ENCODE measurements at regions of chr17 and their contacts with region 1.

Region 1: DNA sequence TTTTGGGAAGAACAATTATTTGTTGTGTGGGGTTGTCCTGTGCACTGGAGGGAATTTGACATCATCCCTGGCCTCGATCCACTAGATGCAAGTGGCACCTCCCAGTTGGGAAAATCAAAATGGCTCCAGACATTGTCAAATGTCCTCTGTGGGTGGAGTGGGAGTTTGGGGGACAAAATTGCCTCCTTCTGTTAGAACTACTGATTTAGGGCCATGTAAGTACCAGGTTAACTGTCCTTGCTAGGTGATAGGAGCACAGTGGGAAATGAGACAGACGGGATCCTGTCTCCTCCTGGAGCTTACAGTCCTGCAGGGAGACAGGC is 56.8 kb downstream of the ARHGAP23 start:
- DNase-seq: no peak
- ATAC-seq: no peak
- H3K4me3 ChIP-seq: no peak overlapping the region
- H3K27ac ChIP-seq: peak overlapping the region in 8 of 10 donors; percentile 2 to 84 (median 27)
- H3K4me1 ChIP-seq: peaks cover 0 to 40% (median 19%) of the 10 kb centered on the region in 9 donors
- H3K27me3 ChIP-seq: no peaks in the 10 kb centered on the region
- CTCF ChIP-seq: peak in 2 of 9 donors; percentile 1 to 12

Region 2: GRCh38 chr17:38379438-38379837 is 105.7 kb before region 1 on chr17:
- intact Hi-C with region 1: no loop called
- DNase-seq: no peak
- ATAC-seq: no peak
- H3K4me3 ChIP-seq: no peak overlapping the region
- H3K27ac ChIP-seq: no peak overlapping the region
- H3K4me1 ChIP-seq: no peaks in the 10 kb centered on the region
- H3K27me3 ChIP-seq: no peaks in the 10 kb centered on the region
- CTCF ChIP-seq: no peak

Region 3: GRCh38 chr17:38421171-38421841 is 63.8 kb before region 1 on chr17:
- intact Hi-C with region 1: loop called in 9 of 10 experiments (anchors 2 to 10 kb)
- DNase-seq: no peak
- ATAC-seq: peak in 6 of 8 donors; percentile 7 to 50 (median 19)
- H3K4me3 ChIP-seq: peak overlapping the region in 1 of 10 donors; percentile 10
- H3K27ac ChIP-seq: peak overlapping the region in 7 of 10 donors; percentile 15 to 90 (median 71)
- H3K4me1 ChIP-seq: peaks cover 10 to 63% (median 48%) of the 10 kb centered on the region in 9 donors
- H3K27me3 ChIP-seq: peaks cover 0 to 56% (median 23%) of the 10 kb centered on the region in 7 donors
- CTCF ChIP-seq: no peak

Region 4: GRCh38 chr17:38428112-38428642 is 56.9 kb before region 1 on chr17 and contains the start of gene ARHGAP23:
- intact Hi-C with region 1: loop called in 9 of 10 experiments (anchors 2 to 10 kb)
- DNase-seq: peak; percentile 77 to 80
- ATAC-seq: peak; percentile 53 to 76 (median 67)
- H3K4me3 ChIP-seq: peak within 1 kb of the TSS; percentile 80 to 99 (median 95)
- H3K27ac ChIP-seq: peak within 1 kb of the TSS; percentile 91 to 100 (median 96)
- H3K4me1 ChIP-seq: peaks cover 19 to 87% (median 67%) of the 10 kb centered on the region in 9 donors
- H3K27me3 ChIP-seq: peaks cover 0 to under 1% (median 0%) of the 10 kb centered on the region in 7 donors
- CTCF ChIP-seq: no peak
- total RNA-seq, gene ARHGAP23: 48.3 to 78.4 (median 68.0) TPM

Region 5: GRCh38 chr17:38444151-38444550 is 41.0 kb before region 1 on chr17:
- intact Hi-C with region 1: loop called in 9 of 10 experiments (anchors 2 to 5 kb)
- DNase-seq: peak; percentile 73 to 75
- ATAC-seq: peak; percentile 63 to 78 (median 70)
- H3K4me3 ChIP-seq: peak overlapping the region in 3 of 10 donors; percentile 9 to 17 (median 13)
- H3K27ac ChIP-seq: peak overlapping the region in 7 of 10 donors; percentile 70 to 91 (median 81)
- H3K4me1 ChIP-seq: peaks cover 17 to 81% (median 65%) of the 10 kb centered on the region in 9 donors
- H3K27me3 ChIP-seq: no peaks in the 10 kb centered on the region
- CTCF ChIP-seq: peak; percentile 80 to 96 (median 88)

Region 6: DNA sequence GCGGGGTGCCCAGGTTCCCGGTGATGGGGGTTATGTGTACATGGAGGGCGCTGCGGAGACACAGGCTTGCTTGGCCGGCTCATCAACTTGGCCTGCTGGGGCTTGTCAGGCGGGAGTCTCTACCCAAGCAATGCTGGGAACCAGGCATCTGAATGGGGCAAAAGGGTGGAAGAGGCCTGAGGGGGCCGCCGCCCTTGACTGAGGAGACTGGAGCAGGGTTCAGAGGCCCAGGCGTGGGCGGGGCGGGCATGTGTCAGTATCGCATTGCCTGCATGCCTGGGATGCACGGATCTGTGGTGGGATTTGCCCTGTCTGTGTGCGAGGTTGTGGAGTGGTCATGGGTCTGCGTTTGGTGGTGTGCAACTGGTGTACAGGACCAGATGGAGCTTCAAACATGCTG is 35.7 kb before region 1 on chr17:
- intact Hi-C with region 1: loop called in 9 of 10 experiments (anchors 2 to 5 kb)
- DNase-seq: no peak
- ATAC-seq: peak in 1 of 8 donors; percentile 7
- H3K4me3 ChIP-seq: no peak overlapping the region
- H3K27ac ChIP-seq: peak overlapping the region in 9 of 10 donors; percentile 56 to 91 (median 87)
- H3K4me1 ChIP-seq: peaks cover 28 to 75% (median 64%) of the 10 kb centered on the region in 9 donors
- H3K27me3 ChIP-seq: peaks cover 0 to 23% (median 0%) of the 10 kb centered on the region in 7 donors
- CTCF ChIP-seq: no peak